ENCODE measurements at regions of chr1 and their contacts with region 1.

Region 1: DNA sequence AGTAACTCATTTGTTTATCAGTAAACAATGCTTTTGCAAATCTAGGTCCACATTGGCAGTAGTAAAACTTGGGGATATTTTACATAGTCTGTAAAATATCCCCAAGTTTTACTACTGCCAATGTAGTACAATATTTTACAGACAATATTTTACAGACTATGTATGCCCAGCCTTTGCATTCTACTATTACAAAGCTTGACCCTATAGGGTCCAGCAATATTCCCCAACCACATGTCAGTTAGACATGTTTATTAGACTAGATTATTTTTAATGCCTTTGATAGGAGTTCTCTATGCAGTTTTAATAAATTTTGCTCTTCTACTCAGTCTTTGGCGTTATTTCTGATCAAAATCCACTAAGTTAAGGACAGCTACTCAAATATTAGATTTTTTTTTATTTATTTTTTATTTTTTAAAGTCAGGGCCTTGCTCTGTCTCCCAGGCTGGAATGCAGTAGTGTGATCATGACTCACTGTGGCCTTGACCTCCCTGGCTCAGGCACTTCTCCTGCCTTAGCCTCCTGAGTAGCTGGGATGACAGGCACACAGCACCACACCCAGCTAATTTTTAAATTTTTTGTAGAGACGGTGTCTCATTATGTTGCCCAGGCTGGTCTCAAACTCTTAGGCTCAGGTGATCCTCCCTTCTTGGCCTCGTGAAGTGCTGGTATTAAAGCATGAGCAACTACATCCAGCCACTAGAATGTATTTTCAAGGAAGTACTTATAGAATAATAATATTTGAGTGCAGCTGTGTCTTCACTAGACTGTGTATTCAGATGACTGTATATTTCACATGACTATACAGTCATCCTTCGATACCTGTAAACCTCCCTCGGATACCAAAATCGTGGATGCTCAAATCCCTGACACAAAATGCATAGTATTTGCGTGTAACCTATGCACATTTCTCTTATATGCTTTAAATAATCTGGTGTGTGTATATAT is 19.8 kb downstream of the MIER1 start:
- DNase-seq: no peak
- H3K4me3 ChIP-seq: no peak overlapping the region
- H3K4me3 Mint-ChIP-seq: no peak overlapping the region
- H3K27ac ChIP-seq: no peak overlapping the region
- H3K27ac Mint-ChIP-seq: peak overlapping the region in 2 of 7 donors; percentile 15 to 62
- H3K4me1 ChIP-seq: peaks cover 63% of the 10 kb centered on the region
- H3K4me1 Mint-ChIP-seq: peaks cover 48 to 84% (median 63%) of the 10 kb centered on the region in 4 donors
- H3K27me3 ChIP-seq: no peaks in the 10 kb centered on the region
- H3K27me3 Mint-ChIP-seq: no peaks in the 10 kb centered on the region

Region 2: GRCh38 chr1:66764994-66765578 is 179.5 kb before region 1 on chr1:
- CTCF ChIA-PET with region 1: no interaction called
- POLR2A ChIA-PET with region 1: no interaction called
- intact Hi-C with region 1: no loop called
- DNase-seq: peak; percentile 53 to 59 (median 54)
- H3K4me3 ChIP-seq: no peak overlapping the region
- H3K4me3 Mint-ChIP-seq: no peak overlapping the region
- H3K27ac ChIP-seq: no peak overlapping the region
- H3K27ac Mint-ChIP-seq: no peak overlapping the region
- H3K4me1 ChIP-seq: peaks cover 13% of the 10 kb centered on the region
- H3K4me1 Mint-ChIP-seq: peaks cover 13 to 17% (median 15%) of the 10 kb centered on the region in 4 donors
- H3K27me3 ChIP-seq: no peaks in the 10 kb centered on the region
- H3K27me3 Mint-ChIP-seq: no peaks in the 10 kb centered on the region

Region 3: GRCh38 chr1:66968574-66968973 is 24.0 kb after region 1 on chr1:
- CTCF ChIA-PET with region 1: no interaction called
- POLR2A ChIA-PET with region 1: no interaction called
- intact Hi-C with region 1: loop called (anchors 2 kb)
- DNase-seq: no peak
- H3K4me3 ChIP-seq: no peak overlapping the region
- H3K4me3 Mint-ChIP-seq: no peak overlapping the region
- H3K27ac ChIP-seq: no peak overlapping the region
- H3K27ac Mint-ChIP-seq: peak overlapping the region in 4 of 7 donors; percentile 11 to 71 (median 42)
- H3K4me1 ChIP-seq: no peaks in the 10 kb centered on the region
- H3K4me1 Mint-ChIP-seq: peaks cover 19 to 36% (median 27%) of the 10 kb centered on the region in 4 donors
- H3K27me3 ChIP-seq: no peaks in the 10 kb centered on the region
- H3K27me3 Mint-ChIP-seq: no peaks in the 10 kb centered on the region

Region 4: DNA sequence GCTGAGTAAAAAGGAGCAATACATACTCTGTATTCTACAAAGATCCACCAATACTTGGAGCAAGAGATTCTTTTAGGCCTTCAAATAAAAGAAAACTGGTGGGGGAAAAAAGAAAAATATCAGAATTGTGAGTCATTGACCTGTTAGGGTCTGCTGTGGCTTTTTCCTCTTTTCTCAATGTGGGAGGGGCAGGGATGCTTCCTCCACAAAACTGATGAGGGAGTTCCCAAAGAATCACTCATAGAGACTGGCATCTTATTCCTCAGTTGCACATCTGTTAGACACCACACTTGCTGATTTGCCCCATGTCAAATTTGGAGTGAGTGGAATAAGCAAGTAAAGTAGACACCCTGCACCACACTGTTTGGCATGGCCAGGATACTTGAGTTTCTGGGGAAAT is 173.6 kb after region 1 on chr1:
- CTCF ChIA-PET with region 1: no interaction called
- POLR2A ChIA-PET with region 1: no interaction called
- intact Hi-C with region 1: no loop called
- DNase-seq: no peak
- H3K4me3 ChIP-seq: no peak overlapping the region
- H3K4me3 Mint-ChIP-seq: no peak overlapping the region
- H3K27ac ChIP-seq: no peak overlapping the region
- H3K27ac Mint-ChIP-seq: no peak overlapping the region
- H3K4me1 ChIP-seq: no peaks in the 10 kb centered on the region
- H3K4me1 Mint-ChIP-seq: no peaks in the 10 kb centered on the region
- H3K27me3 ChIP-seq: no peaks in the 10 kb centered on the region
- H3K27me3 Mint-ChIP-seq: no peaks in the 10 kb centered on the region